Naive thymus-derived CD4-positive, alpha-beta T cell (primary cell): ENCODE measurements at regions of chr3 and their contacts with region 1.

Region 1: DNA sequence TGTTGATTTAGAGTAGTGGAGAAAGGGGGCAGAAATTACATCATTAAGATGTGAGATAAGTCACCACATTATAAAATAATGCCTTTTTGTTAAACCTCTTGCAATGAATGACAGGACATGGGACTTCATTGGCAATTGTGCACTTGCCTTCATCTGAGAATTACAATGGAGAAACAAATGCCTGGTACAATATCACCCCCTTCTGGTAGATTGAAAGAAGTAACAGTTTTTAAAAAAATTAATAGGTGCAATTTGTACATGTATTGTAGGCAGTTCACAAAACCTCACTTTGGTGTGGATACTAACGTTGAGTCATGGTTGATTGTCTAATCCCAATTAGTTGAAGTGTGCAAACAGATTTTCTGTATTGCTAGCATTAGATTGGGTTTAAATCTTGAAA is 4.6 kb upstream of the P2RY14 start:
- DNase-seq: peak in 7 of 9 donors; percentile 39 to 74 (median 68)
- ATAC-seq: peak; percentile 76
- H3K4me3 ChIP-seq: no peak overlapping the region
- H3K4me3 Mint-ChIP-seq: peak overlapping the region in 1 of 10 donors; percentile 41
- H3K27ac ChIP-seq: no peak overlapping the region
- H3K27ac Mint-ChIP-seq: peak overlapping the region in 1 of 9 donors; percentile 56
- H3K4me1 ChIP-seq: peaks cover 6 to 9% of the 10 kb centered on the region in 2 donors
- H3K4me1 Mint-ChIP-seq: peaks cover 7 to 57% (median 18%) of the 10 kb centered on the region in 7 donors
- H3K27me3 ChIP-seq: no peaks in the 10 kb centered on the region
- H3K27me3 Mint-ChIP-seq: no peaks in the 10 kb centered on the region

Region 2: DNA sequence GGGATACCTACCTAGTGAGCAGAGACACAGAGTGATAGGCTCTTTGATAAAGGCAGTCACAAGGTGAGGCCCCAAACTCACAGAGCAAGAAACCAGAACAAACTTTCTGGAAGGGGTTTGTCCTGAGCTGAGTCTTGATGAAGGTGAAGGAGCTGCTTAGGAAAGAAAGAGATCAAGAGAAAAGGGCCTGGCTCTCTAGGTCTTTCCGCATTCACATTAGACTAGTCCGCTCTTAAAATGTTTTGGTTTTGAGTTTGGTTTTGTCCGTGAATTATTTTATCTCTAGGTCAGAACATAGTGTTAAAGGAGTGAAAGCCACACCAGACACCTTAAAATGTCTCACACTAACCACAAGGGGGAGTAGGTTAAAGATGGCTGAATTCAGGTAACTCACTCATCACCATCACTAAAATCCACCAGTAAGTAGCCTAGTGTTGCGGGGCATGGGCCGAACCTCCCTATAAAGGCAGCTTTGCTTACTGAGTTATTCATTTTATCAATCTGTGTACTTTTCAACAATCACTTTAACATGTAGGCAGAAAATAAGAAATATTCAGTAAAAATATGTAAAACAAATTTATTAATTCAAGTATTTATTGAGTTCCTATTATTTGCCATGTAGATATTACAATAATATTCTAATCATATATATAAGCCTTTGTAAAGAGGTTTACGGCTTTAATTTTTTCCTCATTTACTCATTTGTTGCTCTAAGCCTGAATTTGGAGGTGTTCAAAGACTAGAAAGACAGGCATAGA is 996.4 kb before region 1 on chr3:
- CTCF ChIA-PET with region 1: no interaction called
- POLR2A ChIA-PET with region 1: no interaction called
- intact Hi-C with region 1: no loop called
- DNase-seq: peak in 7 of 9 donors; percentile 17 to 61 (median 50)
- ATAC-seq: peak; percentile 72
- H3K4me3 ChIP-seq: no peak overlapping the region
- H3K4me3 Mint-ChIP-seq: no peak overlapping the region
- H3K27ac ChIP-seq: no peak overlapping the region
- H3K27ac Mint-ChIP-seq: no peak overlapping the region
- H3K4me1 ChIP-seq: no peaks in the 10 kb centered on the region
- H3K4me1 Mint-ChIP-seq: no peaks in the 10 kb centered on the region
- H3K27me3 ChIP-seq: no peaks in the 10 kb centered on the region
- H3K27me3 Mint-ChIP-seq: peaks cover 4 to 69% (median 14%) of the 10 kb centered on the region in 5 donors

Region 3: DNA sequence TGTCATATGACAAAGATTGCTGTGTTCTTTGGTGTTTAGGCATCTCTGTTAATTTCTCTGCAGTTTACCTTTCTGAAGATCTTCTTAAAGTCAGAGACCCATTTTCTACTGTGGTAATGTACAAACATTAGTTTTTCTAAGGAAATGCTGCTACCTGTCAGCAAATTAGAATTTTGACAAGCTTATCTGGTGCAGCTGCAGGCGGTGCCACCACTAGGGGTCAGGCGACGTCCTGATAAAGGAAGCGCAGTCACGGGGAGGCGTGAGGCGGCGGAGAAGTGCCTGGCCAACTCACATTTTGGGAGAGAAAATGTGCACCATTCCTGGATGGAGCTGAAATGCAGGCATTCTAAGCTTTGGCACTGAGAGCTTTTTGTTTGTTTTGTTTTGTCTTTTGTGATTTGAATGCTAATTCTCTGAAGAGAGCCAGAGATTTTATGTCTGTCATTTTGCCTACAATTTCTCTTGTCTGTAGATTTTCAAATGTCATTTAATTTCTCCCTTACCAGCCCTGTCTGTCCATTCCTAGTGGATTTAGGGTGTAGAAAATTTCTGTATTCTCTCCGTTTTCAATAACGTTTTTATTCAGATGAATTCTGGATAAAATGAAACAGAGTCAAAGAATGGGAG is 495.1 kb before region 1 on chr3:
- CTCF ChIA-PET with region 1: no interaction called
- POLR2A ChIA-PET with region 1: no interaction called
- intact Hi-C with region 1: loop called in 1 of 2 experiments (anchors 5 kb)
- DNase-seq: peak; percentile 45 to 77 (median 63)
- ATAC-seq: peak; percentile 92
- H3K4me3 ChIP-seq: no peak overlapping the region
- H3K4me3 Mint-ChIP-seq: peak overlapping the region in 2 of 10 donors; percentile 24 to 50
- H3K27ac ChIP-seq: no peak overlapping the region
- H3K27ac Mint-ChIP-seq: no peak overlapping the region
- H3K4me1 ChIP-seq: no peaks in the 10 kb centered on the region
- H3K4me1 Mint-ChIP-seq: peaks cover 0 to 22% (median 4%) of the 10 kb centered on the region in 7 donors
- H3K27me3 ChIP-seq: no peaks in the 10 kb centered on the region
- H3K27me3 Mint-ChIP-seq: peaks cover 0 to 9% (median 4%) of the 10 kb centered on the region in 5 donors

Region 4: GRCh38 chr3:151156618-151157216 is 126.2 kb before region 1 on chr3:
- CTCF ChIA-PET with region 1: interaction called, 7 read pairs
- POLR2A ChIA-PET with region 1: no interaction called
- intact Hi-C with region 1: loop called (anchors 1 kb)
- DNase-seq: peak in 7 of 9 donors; percentile 27 to 53 (median 44)
- ATAC-seq: peak; percentile 82
- H3K4me3 ChIP-seq: no peak overlapping the region
- H3K4me3 Mint-ChIP-seq: no peak overlapping the region
- H3K27ac ChIP-seq: no peak overlapping the region
- H3K27ac Mint-ChIP-seq: no peak overlapping the region
- H3K4me1 ChIP-seq: no peaks in the 10 kb centered on the region
- H3K4me1 Mint-ChIP-seq: no peaks in the 10 kb centered on the region
- H3K27me3 ChIP-seq: no peaks in the 10 kb centered on the region
- H3K27me3 Mint-ChIP-seq: peaks cover 0 to 13% (median 0%) of the 10 kb centered on the region in 5 donors

Region 5: DNA sequence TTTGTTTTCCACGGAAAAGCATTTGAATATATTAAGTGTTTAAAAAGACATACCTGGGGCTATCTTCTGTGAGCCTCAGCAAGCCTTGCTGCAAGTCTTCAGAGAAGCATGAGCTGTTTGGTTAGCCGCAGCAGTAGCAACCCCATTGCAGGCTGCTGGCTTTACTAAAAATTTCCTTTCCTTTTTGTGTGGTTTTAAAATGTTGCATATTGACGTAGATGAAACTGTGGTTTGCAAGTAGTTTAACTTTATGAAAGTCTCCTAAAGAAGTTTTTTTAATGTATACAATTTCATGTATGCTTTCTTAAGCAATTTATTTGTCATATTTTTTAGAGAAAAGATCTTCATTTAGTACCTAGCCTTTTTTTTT is 79.9 kb before region 1 on chr3 and contains the start of gene GPR171:
- CTCF ChIA-PET with region 1: no interaction called
- POLR2A ChIA-PET with region 1: interaction called, 6 read pairs
- intact Hi-C with region 1: loop called (anchors 1 to 2 kb)
- DNase-seq: peak in 8 of 9 donors; percentile 62 to 88 (median 82)
- ATAC-seq: peak; percentile 95
- H3K4me3 ChIP-seq: peak within 1 kb of the TSS; percentile 79
- H3K4me3 Mint-ChIP-seq: peak within 1 kb of the TSS; percentile 72 to 94 (median 84)
- H3K27ac ChIP-seq: peak within 1 kb of the TSS; percentile 75
- H3K27ac Mint-ChIP-seq: peak within 1 kb of the TSS; percentile 76 to 98 (median 94)
- H3K4me1 ChIP-seq: peaks cover 45 to 57% of the 10 kb centered on the region in 2 donors
- H3K4me1 Mint-ChIP-seq: peaks cover 34 to 82% (median 71%) of the 10 kb centered on the region in 7 donors
- H3K27me3 ChIP-seq: no peaks in the 10 kb centered on the region
- H3K27me3 Mint-ChIP-seq: no peaks in the 10 kb centered on the region
- total RNA-seq, gene GPR171: 16.0 to 251 (median 63.4) TPM

Region 6: DNA sequence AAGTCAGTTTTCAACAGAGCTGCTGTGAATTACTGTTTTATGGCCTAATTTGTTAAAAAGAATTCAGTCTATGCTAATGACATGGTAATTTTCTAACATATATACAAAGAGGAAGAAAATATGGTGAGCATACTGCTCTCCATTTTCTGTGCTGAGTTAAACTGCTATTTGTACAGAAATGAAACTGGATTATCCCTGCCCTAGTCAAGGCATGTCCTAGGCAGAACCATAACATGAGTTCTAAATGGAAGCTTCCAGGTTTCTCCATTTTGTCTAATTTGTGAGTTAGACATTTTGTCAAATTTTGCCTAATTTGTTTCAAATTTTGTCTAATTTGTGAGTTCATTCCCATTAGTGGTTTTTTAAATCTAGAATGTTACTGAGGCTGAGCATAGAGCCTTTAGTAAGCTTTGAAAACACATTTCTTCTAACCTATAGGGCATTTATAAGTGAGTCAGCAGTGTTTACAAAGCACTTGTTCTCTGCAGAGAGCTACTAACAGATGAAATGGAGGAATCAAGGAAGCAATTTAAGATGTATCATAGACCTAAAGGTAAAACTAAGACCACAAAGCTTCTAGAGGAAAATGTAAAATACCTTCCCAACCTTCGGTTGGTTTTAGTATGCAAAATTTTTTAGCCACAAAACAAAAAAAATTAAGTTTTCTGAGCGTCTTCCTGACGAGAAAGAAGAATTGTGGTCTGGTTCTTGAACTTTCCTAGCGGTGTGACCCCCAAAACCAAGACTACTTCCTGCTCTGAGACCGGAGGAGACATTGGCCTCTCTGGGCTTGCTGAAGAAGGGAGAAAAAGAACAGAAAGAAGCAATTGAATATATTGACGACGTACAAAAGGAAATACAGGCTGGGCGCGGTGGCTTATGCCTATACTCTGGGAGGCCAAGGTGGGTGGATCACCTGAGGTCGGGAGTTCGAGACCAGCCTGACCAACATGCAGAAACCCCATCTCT is 14.4 kb before region 1 on chr3:
- CTCF ChIA-PET with region 1: interaction called, 9 read pairs
- POLR2A ChIA-PET with region 1: interaction called, 9 read pairs
- intact Hi-C with region 1: loop called in 1 of 2 experiments (anchors 2 kb)
- DNase-seq: peak in 5 of 9 donors; percentile 15 to 52 (median 23)
- ATAC-seq: peak; percentile 39
- H3K4me3 ChIP-seq: no peak overlapping the region
- H3K4me3 Mint-ChIP-seq: peak overlapping the region in 9 of 10 donors; percentile 28 to 84 (median 70)
- H3K27ac ChIP-seq: peak overlapping the region; percentile 1
- H3K27ac Mint-ChIP-seq: peak overlapping the region; percentile 70 to 92 (median 83)
- H3K4me1 ChIP-seq: no peaks in the 10 kb centered on the region
- H3K4me1 Mint-ChIP-seq: peaks cover 8 to 58% (median 22%) of the 10 kb centered on the region in 7 donors
- H3K27me3 ChIP-seq: no peaks in the 10 kb centered on the region
- H3K27me3 Mint-ChIP-seq: peaks cover 0 to 4% (median 0%) of the 10 kb centered on the region in 5 donors

Region 7: GRCh38 chr3:151724576-151725562 is 441.9 kb after region 1 on chr3:
- CTCF ChIA-PET with region 1: no interaction called
- POLR2A ChIA-PET with region 1: no interaction called
- intact Hi-C with region 1: no loop called
- DNase-seq: no peak
- ATAC-seq: no peak
- H3K4me3 ChIP-seq: no peak overlapping the region
- H3K4me3 Mint-ChIP-seq: no peak overlapping the region
- H3K27ac ChIP-seq: no peak overlapping the region
- H3K27ac Mint-ChIP-seq: no peak overlapping the region
- H3K4me1 ChIP-seq: no peaks in the 10 kb centered on the region
- H3K4me1 Mint-ChIP-seq: no peaks in the 10 kb centered on the region
- H3K27me3 ChIP-seq: no peaks in the 10 kb centered on the region
- H3K27me3 Mint-ChIP-seq: peaks cover 0 to 19% (median 4%) of the 10 kb centered on the region in 5 donors

Region 8: GRCh38 chr3:151838583-151839312 is 555.8 kb after region 1 on chr3:
- CTCF ChIA-PET with region 1: no interaction called
- POLR2A ChIA-PET with region 1: no interaction called
- intact Hi-C with region 1: loop called in 1 of 2 experiments (anchors 2 kb)
- DNase-seq: peak in 6 of 9 donors; percentile 6 to 40 (median 26)
- ATAC-seq: peak; percentile 70
- H3K4me3 ChIP-seq: no peak overlapping the region
- H3K4me3 Mint-ChIP-seq: no peak overlapping the region
- H3K27ac ChIP-seq: no peak overlapping the region
- H3K27ac Mint-ChIP-seq: no peak overlapping the region
- H3K4me1 ChIP-seq: no peaks in the 10 kb centered on the region
- H3K4me1 Mint-ChIP-seq: peaks cover 0 to 3% (median 0%) of the 10 kb centered on the region in 7 donors
- H3K27me3 ChIP-seq: no peaks in the 10 kb centered on the region
- H3K27me3 Mint-ChIP-seq: peaks cover 6 to 42% (median 11%) of the 10 kb centered on the region in 5 donors